Mammary epithelial cell (primary cell): ENCODE measurements at regions of chr2 and their contacts with region 1.

Region 1: GRCh38 chr2:40032650-40033319 is 253.7 kb upstream of the THUMPD2 start:
- DNase-seq: peak; percentile 91
- H3K4me3 ChIP-seq: no peak overlapping the region
- H3K27ac ChIP-seq: peak overlapping the region; percentile 78
- H3K4me1 ChIP-seq: peaks cover 45% of the 10 kb centered on the region
- H3K27me3 ChIP-seq: no peaks in the 10 kb centered on the region
- CTCF ChIP-seq: no peak

Region 2: GRCh38 chr2:39780825-39781600 is 251.8 kb before region 1 on chr2:
- CTCF ChIA-PET with region 1: no interaction called
- dilution Hi-C with region 1: no loop called
- in situ Hi-C with region 1: no loop called
- intact Hi-C with region 1: loop called (anchors 10 kb)
- DNase-seq: no peak
- H3K4me3 ChIP-seq: peak overlapping the region in 2 of 3 experiments; percentile 10 to 23
- H3K27ac ChIP-seq: no peak overlapping the region
- H3K4me1 ChIP-seq: peaks cover 17% of the 10 kb centered on the region
- H3K27me3 ChIP-seq: no peaks in the 10 kb centered on the region
- CTCF ChIP-seq: no peak

Region 3: DNA sequence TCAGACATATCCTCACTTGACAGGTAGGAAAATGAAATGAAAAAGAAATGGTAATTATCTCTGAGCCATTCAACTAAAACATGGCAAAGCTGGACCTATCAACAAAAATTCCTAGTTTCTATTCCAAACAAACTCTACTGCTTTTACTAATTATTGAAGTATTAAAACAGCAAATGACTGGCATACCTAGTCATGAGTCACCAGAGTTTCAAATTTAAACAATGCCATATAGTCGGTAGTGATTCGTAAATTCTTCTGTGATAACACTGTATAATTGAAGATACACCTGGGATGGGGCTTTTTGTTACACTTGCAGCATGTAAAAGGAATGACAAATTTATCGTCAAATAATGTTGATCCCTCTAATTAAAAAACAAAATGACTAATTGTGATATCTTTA is 100.6 kb before region 1 on chr2:
- CTCF ChIA-PET with region 1: no interaction called
- dilution Hi-C with region 1: no loop called
- in situ Hi-C with region 1: no loop called
- intact Hi-C with region 1: loop called (anchors 5 kb)
- DNase-seq: peak; percentile 15
- H3K4me3 ChIP-seq: no peak overlapping the region
- H3K27ac ChIP-seq: no peak overlapping the region
- H3K4me1 ChIP-seq: peaks cover 3% of the 10 kb centered on the region
- H3K27me3 ChIP-seq: no peaks in the 10 kb centered on the region
- CTCF ChIP-seq: no peak

Region 4: GRCh38 chr2:39996653-39997080 is 36.1 kb before region 1 on chr2:
- CTCF ChIA-PET with region 1: no interaction called
- dilution Hi-C with region 1: no loop called
- in situ Hi-C with region 1: no loop called
- intact Hi-C with region 1: loop called (anchors 1 kb)
- DNase-seq: peak; percentile 96
- H3K4me3 ChIP-seq: no peak overlapping the region
- H3K27ac ChIP-seq: peak overlapping the region; percentile 47
- H3K4me1 ChIP-seq: peaks cover 37% of the 10 kb centered on the region
- H3K27me3 ChIP-seq: no peaks in the 10 kb centered on the region
- CTCF ChIP-seq: no peak

Region 5: DNA sequence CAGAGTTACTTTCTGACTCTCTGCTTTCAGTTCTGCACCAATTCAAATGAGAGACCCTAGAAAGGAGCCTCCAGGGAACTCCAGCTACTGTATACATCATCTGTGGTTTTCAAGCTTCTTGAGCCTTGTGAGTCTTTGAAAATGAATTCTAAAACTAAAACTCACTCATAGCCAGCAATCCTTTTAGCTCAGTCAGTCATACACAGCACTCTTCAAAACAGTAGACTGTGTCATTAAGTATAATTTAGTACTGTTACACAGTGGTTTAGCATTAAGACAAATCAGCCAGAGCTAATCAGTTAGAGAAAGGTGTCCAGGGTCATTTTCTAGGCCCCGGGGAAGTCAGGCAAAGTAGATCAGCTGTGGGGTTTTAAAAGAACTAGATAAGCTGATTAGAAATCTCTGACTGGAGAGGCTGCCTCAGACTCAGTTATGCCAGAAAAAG is 68.4 kb after region 1 on chr2:
- CTCF ChIA-PET with region 1: interaction called, 3 read pairs
- dilution Hi-C with region 1: no loop called
- in situ Hi-C with region 1: no loop called
- intact Hi-C with region 1: loop called (anchors 2 kb)
- DNase-seq: no peak
- H3K4me3 ChIP-seq: no peak overlapping the region
- H3K27ac ChIP-seq: no peak overlapping the region
- H3K4me1 ChIP-seq: peaks cover 51% of the 10 kb centered on the region
- H3K27me3 ChIP-seq: no peaks in the 10 kb centered on the region
- CTCF ChIP-seq: no peak